CD8-positive, alpha-beta T cell (primary cell): ENCODE measurements at regions of chr9 and their contacts with region 1.

Region 1: GRCh38 chr9:109574068-109574882 is 76.2 kb upstream of the PTPN3 start:
- DNase-seq: peak in 2 of 9 experiments; percentile 2 to 22
- ATAC-seq: no peak
- H3K4me3 ChIP-seq: no peak overlapping the region
- H3K4me3 Mint-ChIP-seq: no peak overlapping the region
- H3K27ac ChIP-seq: no peak overlapping the region
- H3K27ac Mint-ChIP-seq: no peak overlapping the region
- H3K4me1 ChIP-seq: no peaks in the 10 kb centered on the region
- H3K4me1 Mint-ChIP-seq: no peaks in the 10 kb centered on the region
- H3K27me3 ChIP-seq: no peaks in the 10 kb centered on the region
- H3K27me3 Mint-ChIP-seq: peaks cover 2% of the 10 kb centered on the region
- CTCF ChIP-seq: peak; percentile 3

Region 2: GRCh38 chr9:109507421-109507838 is 66.8 kb before region 1 on chr9:
- CTCF ChIA-PET with region 1: no interaction called
- POLR2A ChIA-PET with region 1: no interaction called
- intact Hi-C with region 1: no loop called
- DNase-seq: no peak
- ATAC-seq: no peak
- H3K4me3 ChIP-seq: no peak overlapping the region
- H3K4me3 Mint-ChIP-seq: no peak overlapping the region
- H3K27ac ChIP-seq: no peak overlapping the region
- H3K27ac Mint-ChIP-seq: no peak overlapping the region
- H3K4me1 ChIP-seq: no peaks in the 10 kb centered on the region
- H3K4me1 Mint-ChIP-seq: no peaks in the 10 kb centered on the region
- H3K27me3 ChIP-seq: no peaks in the 10 kb centered on the region
- H3K27me3 Mint-ChIP-seq: peaks cover 19% of the 10 kb centered on the region
- CTCF ChIP-seq: no peak

Region 3: GRCh38 chr9:110217656-110218099 is 643.4 kb after region 1 on chr9:
- CTCF ChIA-PET with region 1: no interaction called
- POLR2A ChIA-PET with region 1: no interaction called
- intact Hi-C with region 1: loop called in 1 of 2 experiments (anchors 5 kb)
- DNase-seq: peak in 2 of 9 experiments; percentile 30 to 47
- ATAC-seq: no peak
- H3K4me3 ChIP-seq: no peak overlapping the region
- H3K4me3 Mint-ChIP-seq: no peak overlapping the region
- H3K27ac ChIP-seq: no peak overlapping the region
- H3K27ac Mint-ChIP-seq: no peak overlapping the region
- H3K4me1 ChIP-seq: no peaks in the 10 kb centered on the region
- H3K4me1 Mint-ChIP-seq: no peaks in the 10 kb centered on the region
- H3K27me3 ChIP-seq: no peaks in the 10 kb centered on the region
- H3K27me3 Mint-ChIP-seq: peaks cover 6% of the 10 kb centered on the region
- CTCF ChIP-seq: peak; percentile 84

Region 4: DNA sequence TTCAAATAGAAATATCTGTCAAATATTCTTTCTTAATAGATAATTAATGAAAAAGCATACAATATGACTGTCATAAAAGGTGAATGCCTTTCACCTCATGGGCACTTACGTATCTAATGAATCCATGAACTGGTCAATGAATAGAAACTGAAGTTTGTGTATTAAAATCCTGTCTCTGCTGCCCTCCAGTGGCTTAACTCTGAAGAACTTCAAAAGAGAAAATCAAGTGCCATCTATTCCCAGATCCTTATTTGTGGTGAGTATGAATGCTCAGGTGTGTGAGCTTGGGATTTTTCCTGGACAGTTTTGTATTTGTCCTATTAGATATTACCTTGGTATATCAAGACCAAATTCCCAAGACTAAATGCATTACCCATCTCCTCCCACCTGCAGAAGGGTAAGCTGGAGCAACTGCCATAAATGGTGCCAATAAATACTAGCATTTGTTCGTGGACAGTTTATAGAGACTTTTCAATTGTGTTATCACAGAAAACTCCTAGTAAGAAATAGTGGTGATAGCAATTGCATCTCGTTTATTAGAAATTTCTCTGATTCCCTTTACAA is 1049.3 kb after region 1 on chr9:
- CTCF ChIA-PET with region 1: no interaction called
- POLR2A ChIA-PET with region 1: no interaction called
- intact Hi-C with region 1: loop called in 1 of 2 experiments (anchors 5 kb)
- DNase-seq: peak in 2 of 9 experiments; percentile 5 to 25
- ATAC-seq: no peak
- H3K4me3 ChIP-seq: no peak overlapping the region
- H3K4me3 Mint-ChIP-seq: no peak overlapping the region
- H3K27ac ChIP-seq: no peak overlapping the region
- H3K27ac Mint-ChIP-seq: no peak overlapping the region
- H3K4me1 ChIP-seq: no peaks in the 10 kb centered on the region
- H3K4me1 Mint-ChIP-seq: no peaks in the 10 kb centered on the region
- H3K27me3 ChIP-seq: no peaks in the 10 kb centered on the region
- H3K27me3 Mint-ChIP-seq: no peaks in the 10 kb centered on the region
- CTCF ChIP-seq: no peak